WTC11 (cell line): ENCODE measurements at regions of chr20 and their contacts with region 1.

Region 1: DNA sequence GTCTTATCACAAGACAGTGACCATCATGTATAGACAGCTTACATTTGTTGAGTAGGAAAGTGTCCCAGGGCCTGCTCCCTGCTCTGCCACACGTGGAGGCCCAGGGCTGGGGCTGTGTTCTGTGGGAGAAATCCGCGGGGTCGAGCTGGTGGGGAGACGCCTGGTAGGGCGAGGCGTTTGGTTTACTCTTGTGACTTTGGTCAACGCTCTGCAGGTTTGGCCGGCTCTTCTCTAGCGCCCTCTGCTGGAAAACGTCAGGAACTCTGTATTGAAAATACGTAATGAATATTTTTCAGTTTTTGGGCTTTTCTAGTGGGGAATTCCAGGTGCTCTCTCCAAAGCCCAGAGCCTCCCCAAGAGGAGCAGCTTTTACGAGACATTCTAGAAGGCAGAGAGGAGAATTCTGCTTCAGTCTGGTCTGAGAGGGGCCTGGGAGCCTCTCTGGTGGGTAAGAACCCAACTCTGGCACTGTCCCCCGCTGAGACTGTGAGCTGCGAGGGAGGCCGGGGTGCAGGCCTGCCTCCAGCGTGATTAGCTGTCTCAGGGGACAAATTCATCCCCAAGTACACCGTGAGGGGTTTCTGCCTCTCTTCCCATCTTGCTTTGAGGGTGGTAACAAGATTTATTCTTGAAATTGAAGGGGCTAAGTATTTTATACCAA is 112.6 kb upstream of the RALGAPA2 start:
- DNase-seq: peak; percentile 72
- ATAC-seq: peak; percentile 47
- H3K4me3 Mint-ChIP-seq: no peak overlapping the region
- H3K27ac Mint-ChIP-seq: no peak overlapping the region
- H3K4me1 Mint-ChIP-seq: peaks cover 36% of the 10 kb centered on the region
- H3K27me3 Mint-ChIP-seq: peaks cover 5% of the 10 kb centered on the region
- CTCF ChIP-seq: peak; percentile 84

Region 2: DNA sequence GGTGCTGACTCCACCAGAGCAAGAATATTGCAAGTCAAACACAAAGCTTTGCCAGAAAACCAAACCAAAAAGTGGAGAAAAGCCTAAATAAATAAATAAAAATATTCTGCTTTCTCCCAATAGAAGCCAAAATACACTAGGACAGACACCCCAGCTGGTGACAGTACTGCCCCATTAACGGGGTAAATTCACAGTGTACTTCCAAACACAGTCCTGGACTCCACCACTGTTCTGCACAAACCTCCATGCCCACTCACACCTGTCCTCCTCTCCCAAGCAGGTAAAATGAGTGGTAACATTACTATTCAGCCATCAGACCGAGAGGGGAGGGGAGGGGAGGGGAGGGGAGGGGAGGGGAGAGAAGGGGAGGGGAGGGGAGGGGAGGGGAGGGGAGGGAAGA is 183.3 kb before region 1 on chr20:
- CTCF ChIA-PET with region 1: interaction called, 11 read pairs
- POLR2A ChIA-PET with region 1: no interaction called
- DNase-seq: no peak
- ATAC-seq: no peak
- H3K4me3 Mint-ChIP-seq: no peak overlapping the region
- H3K27ac Mint-ChIP-seq: no peak overlapping the region
- H3K4me1 Mint-ChIP-seq: peaks cover 11% of the 10 kb centered on the region
- H3K27me3 Mint-ChIP-seq: no peaks in the 10 kb centered on the region
- CTCF ChIP-seq: no peak

Region 3: DNA sequence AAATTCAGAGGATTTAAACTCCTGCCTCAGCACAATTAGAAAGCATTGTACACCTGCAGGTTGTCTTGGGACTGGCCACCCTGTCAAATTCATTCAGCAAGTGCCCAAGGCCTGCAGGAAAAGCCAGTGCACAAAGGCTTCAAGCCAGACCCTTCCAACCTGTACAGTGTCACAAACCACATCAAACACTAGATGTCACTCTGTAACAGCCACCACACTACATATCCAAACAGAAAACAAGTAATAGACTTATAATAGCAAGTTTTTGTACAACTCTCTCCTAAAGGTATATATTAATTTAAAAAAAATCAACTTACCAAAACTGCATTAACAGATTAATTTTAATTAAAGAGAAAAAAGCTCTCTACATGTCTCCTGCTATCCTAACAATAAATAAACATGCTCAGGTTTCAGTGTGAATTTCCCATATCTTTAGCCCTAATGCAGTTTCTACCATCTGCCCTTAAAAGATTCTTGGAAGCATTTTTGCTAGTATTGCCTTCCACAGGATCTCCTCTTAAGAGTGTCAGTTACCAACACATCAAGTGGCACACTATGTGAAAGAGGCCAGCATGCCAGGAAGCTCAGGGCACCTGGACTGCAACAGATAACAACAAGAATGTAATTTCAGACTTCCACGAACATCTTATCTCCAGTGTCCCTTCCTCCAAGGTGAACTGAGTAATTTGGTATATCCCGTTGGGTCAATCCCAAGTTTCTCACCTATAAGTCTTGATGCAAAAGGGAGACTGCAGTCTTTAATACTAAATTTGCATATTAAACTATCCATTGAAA is 160.1 kb before region 1 on chr20:
- CTCF ChIA-PET with region 1: interaction called, 11 read pairs
- POLR2A ChIA-PET with region 1: no interaction called
- DNase-seq: no peak
- ATAC-seq: peak; percentile 82
- H3K4me3 Mint-ChIP-seq: no peak overlapping the region
- H3K27ac Mint-ChIP-seq: no peak overlapping the region
- H3K4me1 Mint-ChIP-seq: peaks cover 23% of the 10 kb centered on the region
- H3K27me3 Mint-ChIP-seq: no peaks in the 10 kb centered on the region
- CTCF ChIP-seq: no peak

Region 4: DNA sequence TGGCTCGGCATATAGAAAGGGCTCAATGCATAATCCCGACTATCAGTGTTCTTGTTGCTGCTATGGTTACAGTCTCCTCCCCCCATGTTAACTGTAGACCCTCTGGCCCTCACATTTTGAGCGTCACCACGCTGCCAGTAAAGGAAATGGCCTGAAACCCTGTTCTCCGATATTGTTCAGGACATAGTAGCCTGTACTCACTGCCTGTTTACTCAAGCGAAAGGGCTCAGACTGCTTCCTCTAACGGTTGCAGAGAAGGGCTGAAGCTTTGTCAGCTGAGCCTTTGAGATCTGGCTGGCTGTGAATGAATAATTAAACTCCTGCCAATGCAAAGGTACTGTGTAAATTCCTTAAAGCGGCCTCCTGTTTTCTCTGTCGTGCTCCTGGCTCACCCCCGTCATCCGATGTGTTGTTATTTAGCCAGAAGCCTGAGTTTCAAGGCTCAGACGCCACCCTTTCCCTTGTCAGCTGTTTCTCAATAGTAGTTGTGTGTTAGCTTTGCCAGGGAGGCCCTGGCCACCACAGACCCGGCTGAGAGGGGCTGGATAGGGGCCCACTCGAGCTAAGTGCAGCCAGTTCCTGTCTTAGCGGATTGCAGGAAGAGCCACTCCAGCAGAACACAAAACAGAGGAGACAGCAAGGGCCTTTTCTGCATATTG is 81.4 kb before region 1 on chr20:
- CTCF ChIA-PET with region 1: interaction called, 10 read pairs
- POLR2A ChIA-PET with region 1: no interaction called
- DNase-seq: peak; percentile 21
- ATAC-seq: peak; percentile 86
- H3K4me3 Mint-ChIP-seq: peak overlapping the region; percentile 19
- H3K27ac Mint-ChIP-seq: peak overlapping the region; percentile 86
- H3K4me1 Mint-ChIP-seq: peaks cover 24% of the 10 kb centered on the region
- H3K27me3 Mint-ChIP-seq: no peaks in the 10 kb centered on the region; the same call in 1 of the 2 replicates
- CTCF ChIP-seq: no peak

Region 5: GRCh38 chr20:20793591-20793990 is 31.5 kb before region 1 on chr20:
- CTCF ChIA-PET with region 1: interaction called, 11 read pairs
- POLR2A ChIA-PET with region 1: no interaction called
- DNase-seq: no peak
- ATAC-seq: no peak
- H3K4me3 Mint-ChIP-seq: no peak overlapping the region
- H3K27ac Mint-ChIP-seq: no peak overlapping the region
- H3K4me1 Mint-ChIP-seq: peaks cover 6% of the 10 kb centered on the region
- H3K27me3 Mint-ChIP-seq: no peaks in the 10 kb centered on the region
- CTCF ChIP-seq: no peak

Region 6: GRCh38 chr20:20837574-20838021 is 12.5 kb after region 1 on chr20:
- CTCF ChIA-PET with region 1: interaction called, 19 read pairs
- POLR2A ChIA-PET with region 1: no interaction called
- DNase-seq: peak; percentile 68
- ATAC-seq: peak; percentile 78
- H3K4me3 Mint-ChIP-seq: peak overlapping the region; percentile 46
- H3K27ac Mint-ChIP-seq: no peak overlapping the region
- H3K4me1 Mint-ChIP-seq: peaks cover 6% of the 10 kb centered on the region; the same call in 1 of the 2 replicates
- H3K27me3 Mint-ChIP-seq: peaks cover 3% of the 10 kb centered on the region
- CTCF ChIP-seq: peak; percentile 67

Region 7: GRCh38 chr20:20843982-20844381 is 18.9 kb after region 1 on chr20:
- CTCF ChIA-PET with region 1: interaction called, 10 read pairs
- POLR2A ChIA-PET with region 1: no interaction called
- DNase-seq: peak; percentile 58
- ATAC-seq: peak; percentile 98
- H3K4me3 Mint-ChIP-seq: no peak overlapping the region
- H3K27ac Mint-ChIP-seq: no peak overlapping the region
- H3K4me1 Mint-ChIP-seq: no peaks in the 10 kb centered on the region
- H3K27me3 Mint-ChIP-seq: no peaks in the 10 kb centered on the region; the same call in none of the 2 replicates
- CTCF ChIP-seq: no peak

Region 8: DNA sequence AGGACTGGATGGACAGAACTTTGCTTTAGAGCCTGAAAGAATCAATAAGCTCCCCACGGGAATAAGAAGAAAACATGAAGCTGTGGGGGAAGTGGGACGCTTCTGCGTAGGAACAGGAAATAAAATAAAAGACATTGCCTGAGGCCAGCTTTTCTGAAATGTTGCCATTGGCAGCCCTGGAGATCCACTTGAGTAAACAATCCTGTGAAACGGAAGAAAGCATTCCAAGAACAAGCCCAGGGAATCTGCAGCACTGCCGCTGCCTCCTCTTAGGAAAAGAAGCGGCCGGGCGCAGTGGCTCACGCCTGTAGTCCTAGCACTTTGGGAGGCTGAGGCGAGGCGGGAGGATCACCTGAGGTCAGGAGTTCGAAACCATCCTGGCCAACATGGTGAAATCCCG is 69.7 kb after region 1 on chr20:
- CTCF ChIA-PET with region 1: no interaction called
- POLR2A ChIA-PET with region 1: no interaction called
- DNase-seq: no peak
- ATAC-seq: no peak
- H3K4me3 Mint-ChIP-seq: no peak overlapping the region
- H3K27ac Mint-ChIP-seq: no peak overlapping the region
- H3K4me1 Mint-ChIP-seq: peaks cover 62% of the 10 kb centered on the region
- H3K27me3 Mint-ChIP-seq: no peaks in the 10 kb centered on the region
- CTCF ChIP-seq: no peak